ENCODE measurements at regions of chr4 and their contacts with region 1.

Region 1: GRCh38 chr4:174107746-174108354 is 175.6 kb downstream of the FBXO8 start:
- DNase-seq: no peak

Region 2: GRCh38 chr4:174120446-174121295 is 12.8 kb after region 1 on chr4:
- CTCF ChIA-PET with region 1: interaction called, 10 read pairs
- POLR2A ChIA-PET with region 1: no interaction called
- DNase-seq: peak; percentile 55

Measured in HEK293T (cell line).